Heart right ventricle (tissue), 16 donors: ENCODE measurements at regions of chr17 and their contacts with region 1.

Region 1: GRCh38 chr17:17041571-17042380 is 481 bp upstream of the MPRIP start:
- DNase-seq: peak; percentile 99
- ATAC-seq: peak; percentile 92 to 97 (median 96)
- H3K4me3 ChIP-seq: peak overlapping the region in 9 of 10 donors; percentile 36 to 65 (median 55)
- H3K27ac ChIP-seq: peak overlapping the region in 9 of 10 donors; percentile 44 to 87 (median 71)
- H3K4me1 ChIP-seq: peaks cover 9 to 55% (median 49%) of the 10 kb centered on the region in 9 donors
- H3K27me3 ChIP-seq: no peaks in the 10 kb centered on the region
- CTCF ChIP-seq: no peak

Region 2: DNA sequence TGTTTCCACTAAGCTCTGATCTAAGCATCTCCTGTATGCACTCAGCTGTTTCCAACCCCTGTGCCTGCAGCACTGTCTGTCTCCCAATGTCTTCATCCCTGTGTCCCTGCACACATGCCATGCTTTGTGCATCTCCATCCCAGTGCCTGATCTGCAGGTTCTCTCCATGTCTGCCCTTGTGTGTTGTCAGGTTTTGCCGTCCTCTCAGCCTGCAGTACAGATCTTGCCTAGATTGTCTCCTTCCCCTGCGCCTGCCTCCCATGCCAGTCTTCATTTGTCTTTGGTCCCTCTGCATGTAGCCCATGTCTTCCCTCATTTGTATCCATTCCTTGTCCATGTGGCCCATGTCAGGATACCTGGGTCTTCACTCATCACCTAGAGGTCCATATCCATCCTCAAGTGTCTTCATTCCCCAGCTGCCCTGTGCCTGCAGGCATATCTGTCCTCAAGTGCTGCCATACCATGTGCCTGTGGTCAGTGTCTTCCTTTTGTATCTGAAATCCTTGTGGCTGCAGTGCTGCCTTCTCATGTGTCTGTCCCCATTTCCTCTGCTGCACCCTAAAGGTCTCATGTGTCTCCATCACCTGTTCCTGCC is 141.4 kb before region 1 on chr17:
- intact Hi-C with region 1: no loop called
- DNase-seq: no peak
- ATAC-seq: no peak
- H3K4me3 ChIP-seq: no peak overlapping the region
- H3K27ac ChIP-seq: no peak overlapping the region
- H3K4me1 ChIP-seq: no peaks in the 10 kb centered on the region
- H3K27me3 ChIP-seq: peaks cover 0 to 23% (median 13%) of the 10 kb centered on the region in 7 donors
- CTCF ChIP-seq: no peak

Region 3: DNA sequence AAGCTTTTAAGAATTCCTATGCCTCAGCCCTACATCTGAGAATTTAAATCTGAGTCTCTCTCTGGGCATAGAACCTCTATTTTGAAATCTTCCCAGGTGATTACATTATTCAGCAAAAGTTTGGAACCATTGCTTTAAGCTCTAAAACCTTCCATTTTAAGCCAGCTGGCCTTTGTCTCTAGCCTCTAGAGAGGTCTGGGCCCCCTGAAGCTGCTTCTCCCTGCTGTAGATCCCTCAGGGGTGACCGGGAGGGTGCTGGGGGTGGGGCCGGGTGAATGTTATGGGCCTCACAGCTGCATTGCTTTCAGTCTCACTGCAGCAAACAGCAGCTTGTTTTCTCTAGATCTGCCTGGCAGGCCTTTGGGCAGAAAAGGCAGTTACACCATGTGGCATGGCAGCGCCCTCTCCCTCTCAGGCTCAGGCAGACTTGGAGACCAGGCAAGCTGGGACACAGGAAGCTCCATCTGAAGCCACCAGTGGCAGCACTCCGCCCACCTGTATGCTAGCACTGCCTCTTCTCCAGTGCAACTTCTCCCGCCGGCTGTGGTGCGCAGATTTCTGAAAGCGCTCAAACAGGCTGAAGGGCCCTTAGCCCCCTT is 66.8 kb after region 1 on chr17:
- intact Hi-C with region 1: loop called in 3 of 10 experiments (anchors 5 to 10 kb)
- DNase-seq: no peak
- ATAC-seq: peak in 5 of 8 donors; percentile 11 to 49 (median 29)
- H3K4me3 ChIP-seq: no peak overlapping the region
- H3K27ac ChIP-seq: peak overlapping the region in 9 of 10 donors; percentile 54 to 90 (median 74)
- H3K4me1 ChIP-seq: peaks cover 47 to 100% (median 91%) of the 10 kb centered on the region in 9 donors
- H3K27me3 ChIP-seq: no peaks in the 10 kb centered on the region
- CTCF ChIP-seq: peak in 1 of 9 donors; percentile 11

Region 4: GRCh38 chr17:17119533-17119932 is 77.8 kb after region 1 on chr17:
- intact Hi-C with region 1: loop called in 1 of 10 experiments (anchors 10 kb)
- DNase-seq: no peak
- ATAC-seq: peak in 7 of 8 donors; percentile 11 to 40 (median 25)
- H3K4me3 ChIP-seq: no peak overlapping the region
- H3K27ac ChIP-seq: peak overlapping the region; percentile 14 to 85 (median 72)
- H3K4me1 ChIP-seq: peaks cover 45 to 94% (median 76%) of the 10 kb centered on the region in 9 donors
- H3K27me3 ChIP-seq: no peaks in the 10 kb centered on the region
- CTCF ChIP-seq: no peak

Region 5: GRCh38 chr17:17289701-17290100 is 247.9 kb after region 1 on chr17:
- intact Hi-C with region 1: no loop called
- DNase-seq: no peak
- ATAC-seq: no peak
- H3K4me3 ChIP-seq: no peak overlapping the region
- H3K27ac ChIP-seq: no peak overlapping the region
- H3K4me1 ChIP-seq: no peaks in the 10 kb centered on the region
- H3K27me3 ChIP-seq: no peaks in the 10 kb centered on the region
- CTCF ChIP-seq: no peak